GM10248 (cell line): ENCODE measurements at regions of chr2 and their contacts with region 1.

Region 1: GRCh38 chr2:166127217-166128155 is at the start of gene SCN1A:
- DNase-seq: peak; percentile 17
- CTCF ChIP-seq: peak; percentile 54

Region 2: DNA sequence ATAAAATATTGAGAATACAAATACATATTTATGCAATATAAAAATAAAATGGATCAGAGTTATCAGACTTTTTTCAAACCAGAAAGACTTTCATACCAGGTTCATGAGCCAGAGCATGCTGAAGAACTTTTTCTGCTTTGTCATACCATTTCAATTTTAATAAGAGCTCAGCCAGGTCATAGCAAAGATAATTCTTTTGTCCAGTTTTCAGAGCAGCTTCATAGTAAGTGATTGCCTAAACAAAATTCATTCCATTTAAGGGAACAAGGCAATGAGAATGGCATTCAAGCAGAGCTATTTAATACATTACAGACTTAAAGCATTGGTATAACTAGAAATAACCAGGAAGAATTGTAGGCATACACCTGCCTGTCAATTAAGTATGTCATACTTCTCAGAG is 216.3 kb before region 1 on chr2:
- CTCF ChIA-PET with region 1: no interaction called
- POLR2A ChIA-PET with region 1: no interaction called
- DNase-seq: no peak
- CTCF ChIP-seq: no peak

Region 3: DNA sequence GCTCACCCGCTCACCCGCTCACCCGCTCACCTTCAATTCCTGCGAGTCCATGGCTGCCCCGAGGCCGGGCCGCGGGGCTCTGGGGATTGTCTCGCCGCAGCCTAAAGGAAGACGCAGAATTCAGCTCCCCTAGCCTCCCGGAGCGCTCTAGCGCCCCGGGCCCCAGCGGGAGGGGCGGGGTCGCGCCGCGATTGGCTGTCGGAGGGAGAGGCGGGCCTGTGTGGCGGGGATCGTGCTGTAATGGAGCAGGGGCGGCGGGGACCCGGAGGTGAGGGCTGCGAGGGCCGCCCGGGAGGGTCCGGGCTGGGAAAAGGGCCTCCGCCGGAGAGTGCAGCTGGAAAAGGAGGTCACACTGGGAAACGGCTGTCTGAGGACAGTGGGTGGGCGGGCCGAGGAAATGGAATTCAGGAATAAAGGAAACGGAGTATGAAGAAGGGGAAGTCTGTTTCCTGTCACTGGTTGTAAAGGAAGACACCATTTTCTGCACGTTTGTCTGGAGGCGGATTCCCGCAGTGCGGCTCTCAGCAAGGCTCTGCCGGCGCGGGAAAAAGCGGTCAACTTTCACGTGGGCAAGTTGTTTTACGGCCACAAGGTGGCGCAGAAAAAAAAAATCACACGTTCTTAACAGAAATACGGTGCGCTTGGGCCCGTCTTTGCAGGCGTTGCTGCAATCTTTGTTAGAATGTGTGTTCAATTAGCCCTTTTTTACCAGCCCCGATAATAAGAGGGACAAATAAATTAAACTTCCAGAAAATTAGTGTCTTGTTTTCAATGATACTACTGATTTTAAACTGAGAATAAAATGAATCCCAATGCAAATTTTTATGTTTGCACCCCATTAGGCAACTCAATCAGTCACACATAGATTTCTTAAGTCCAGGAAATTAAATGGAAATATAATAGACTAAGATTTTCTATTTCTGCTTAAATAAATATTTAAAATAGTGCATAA is 173.6 kb before region 1 on chr2 and contains the start of gene TTC21B:
- CTCF ChIA-PET with region 1: interaction called, 26 read pairs
- POLR2A ChIA-PET with region 1: no interaction called
- DNase-seq: peak; percentile 93
- CTCF ChIP-seq: peak; percentile 80

Region 4: GRCh38 chr2:166057370-166058164 is 69.9 kb before region 1 on chr2:
- CTCF ChIA-PET with region 1: interaction called, 23 read pairs
- POLR2A ChIA-PET with region 1: no interaction called
- DNase-seq: no peak
- CTCF ChIP-seq: peak; percentile 7

Region 5: DNA sequence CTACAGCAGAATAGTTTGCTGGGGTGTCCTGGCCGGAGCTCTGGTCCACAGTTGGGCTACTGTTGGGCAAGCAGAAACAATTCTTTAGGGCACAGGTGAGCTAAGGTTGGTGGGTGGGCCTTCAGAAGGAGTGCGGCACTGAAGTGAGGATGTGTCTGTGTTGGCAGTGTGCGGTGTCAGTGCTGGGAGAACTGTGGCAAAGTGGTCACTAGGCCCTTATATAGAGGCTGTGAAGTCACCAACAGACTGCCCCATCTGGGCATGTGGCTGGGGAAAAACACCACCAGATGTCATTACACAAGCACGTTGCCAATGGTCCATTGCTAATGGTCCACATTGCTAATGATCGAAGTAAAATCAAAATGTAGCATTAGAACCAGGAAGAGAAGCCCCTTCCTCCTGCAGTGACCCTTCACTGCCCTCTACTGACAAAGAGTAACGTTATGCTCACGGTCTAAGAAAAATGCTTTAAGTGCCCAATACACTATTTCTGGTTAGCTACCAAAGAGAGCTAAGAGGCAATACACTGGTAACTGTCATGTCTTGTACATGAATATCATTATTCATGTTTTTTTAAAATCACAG is 21.0 kb before region 1 on chr2:
- CTCF ChIA-PET with region 1: interaction called, 11 read pairs
- POLR2A ChIA-PET with region 1: no interaction called
- DNase-seq: no peak
- CTCF ChIP-seq: no peak

Region 6: DNA sequence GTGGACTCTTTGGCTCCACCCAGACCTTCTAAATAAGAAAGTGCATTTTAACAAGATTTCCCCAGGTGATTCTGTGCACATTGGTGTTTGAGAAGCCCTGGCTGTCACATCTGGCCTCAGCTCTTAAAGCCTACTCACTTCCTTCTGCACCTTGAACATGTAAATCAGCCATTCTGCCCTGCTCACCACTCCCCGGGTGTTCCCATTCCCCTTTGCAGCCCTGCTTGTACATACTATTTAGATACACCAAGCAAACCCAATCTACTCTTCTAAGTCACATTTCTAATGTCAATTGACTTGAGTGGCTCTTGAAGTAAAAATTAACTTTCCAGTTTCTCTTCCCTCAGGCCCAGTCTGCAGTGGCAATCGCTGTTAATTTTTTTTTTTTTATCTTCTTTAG is 13.4 kb after region 1 on chr2:
- CTCF ChIA-PET with region 1: interaction called, 22 read pairs
- POLR2A ChIA-PET with region 1: no interaction called
- DNase-seq: no peak
- CTCF ChIP-seq: no peak

Region 7: DNA sequence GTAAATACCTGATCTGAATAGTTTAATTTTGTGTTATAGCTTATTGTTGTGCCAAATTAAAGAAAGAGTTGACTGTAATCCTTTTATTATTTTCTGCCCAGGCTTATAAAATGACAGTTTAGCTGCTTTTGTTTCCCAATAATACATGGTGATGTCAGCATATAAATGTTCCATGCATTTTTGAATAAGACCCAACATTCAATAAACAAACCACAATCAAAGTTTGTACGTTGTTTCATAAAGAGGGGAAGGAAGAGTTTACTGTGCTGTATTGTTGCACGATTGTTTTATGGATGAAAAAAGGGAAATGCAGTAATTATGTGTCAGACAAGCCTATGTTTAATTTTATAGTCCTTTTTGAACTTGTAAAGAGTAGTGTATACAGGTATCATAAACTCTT is 543.7 kb after region 1 on chr2:
- CTCF ChIA-PET with region 1: no interaction called
- POLR2A ChIA-PET with region 1: no interaction called
- DNase-seq: no peak
- CTCF ChIP-seq: no peak